ENCODE measurements at regions of chr19 and their contacts with region 1.

Region 1: DNA sequence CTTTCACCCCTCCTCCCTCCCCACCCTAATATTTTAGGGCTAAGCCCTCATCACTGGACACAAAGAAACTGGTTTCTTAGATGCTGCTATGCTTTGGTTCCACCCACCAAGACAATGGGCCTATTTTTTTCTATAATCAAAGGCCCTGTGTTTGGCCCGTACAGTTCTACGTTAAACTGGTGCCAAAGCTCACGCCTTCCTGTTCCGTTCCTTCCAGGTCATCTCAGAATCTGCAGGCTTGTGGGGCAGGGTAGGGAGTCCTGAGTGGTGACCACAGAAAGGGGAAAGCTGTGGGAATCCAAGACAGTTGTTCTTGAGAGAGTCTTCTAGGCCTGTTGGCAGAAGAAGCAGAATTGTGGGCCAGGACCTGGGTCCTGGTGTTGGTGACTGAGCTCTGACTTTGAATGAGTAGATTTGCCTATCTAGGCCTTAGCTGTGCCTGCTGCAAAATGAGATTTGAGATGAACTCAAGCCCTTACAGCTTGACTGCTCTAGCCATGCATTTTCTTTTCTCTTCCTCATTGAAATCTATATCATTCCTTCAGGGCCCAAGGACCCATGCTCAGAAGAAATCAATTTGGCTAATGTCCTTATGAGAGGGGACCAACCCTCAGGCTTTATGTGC is 19.1 kb upstream of the CXCL17 start:
- DNase-seq: peak; percentile 74
- H3K4me3 Mint-ChIP-seq: no peak overlapping the region
- H3K27ac Mint-ChIP-seq: peak overlapping the region; percentile 0
- H3K4me1 Mint-ChIP-seq: peaks cover 44% of the 10 kb centered on the region
- H3K27me3 Mint-ChIP-seq: no peaks in the 10 kb centered on the region
- CTCF ChIP-seq: no peak

Region 2: DNA sequence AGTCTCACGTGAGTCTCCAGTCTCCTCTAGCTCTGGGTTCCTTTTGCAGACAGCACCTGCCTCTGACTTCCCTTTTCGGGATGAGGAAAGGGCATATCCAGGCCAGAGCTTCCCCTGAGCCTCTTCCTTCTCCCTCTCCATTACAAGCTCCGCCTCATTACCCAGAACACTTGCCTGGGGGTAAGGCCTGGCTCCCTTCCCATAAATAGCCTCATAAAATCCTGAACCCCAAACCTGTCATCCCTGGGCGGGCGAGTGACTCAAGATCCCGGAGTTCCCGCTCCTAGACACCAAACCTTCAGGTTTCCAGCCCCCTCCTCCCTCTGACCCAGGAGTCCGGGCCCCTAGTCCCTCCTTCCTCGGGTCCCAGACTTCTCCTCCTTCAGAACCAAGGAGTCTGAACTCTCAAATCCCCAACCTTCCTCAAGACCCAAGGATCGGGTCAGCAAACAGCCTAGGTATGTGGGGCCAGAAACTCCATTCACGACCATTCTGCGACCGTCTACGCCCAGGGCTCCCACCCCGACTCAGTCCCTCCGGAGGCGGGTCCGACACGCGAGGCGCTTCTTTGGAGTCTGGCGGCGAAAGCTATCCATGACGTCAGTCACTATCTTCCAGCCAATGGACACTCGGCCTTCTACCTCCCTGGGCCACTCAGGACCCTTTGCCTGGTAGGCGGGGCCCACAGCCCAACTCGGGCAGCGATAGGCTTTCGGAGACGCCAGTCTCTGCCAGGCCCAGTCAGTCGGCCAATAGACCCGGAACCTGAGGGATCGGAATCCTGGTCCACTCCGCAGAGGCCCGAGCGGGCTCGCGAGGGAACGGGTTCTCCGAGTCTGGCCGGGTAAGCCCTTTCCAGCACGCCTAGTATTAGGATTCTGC is 65.2 kb before region 1 on chr19:
- CTCF ChIA-PET with region 1: no interaction called
- intact Hi-C with region 1: no loop called
- DNase-seq: peak; percentile 100
- H3K4me3 Mint-ChIP-seq: peak overlapping the region; percentile 86
- H3K27ac Mint-ChIP-seq: peak overlapping the region; percentile 90
- H3K4me1 Mint-ChIP-seq: peaks cover 29% of the 10 kb centered on the region
- H3K27me3 Mint-ChIP-seq: peaks cover 21% of the 10 kb centered on the region
- CTCF ChIP-seq: no peak

Region 3: DNA sequence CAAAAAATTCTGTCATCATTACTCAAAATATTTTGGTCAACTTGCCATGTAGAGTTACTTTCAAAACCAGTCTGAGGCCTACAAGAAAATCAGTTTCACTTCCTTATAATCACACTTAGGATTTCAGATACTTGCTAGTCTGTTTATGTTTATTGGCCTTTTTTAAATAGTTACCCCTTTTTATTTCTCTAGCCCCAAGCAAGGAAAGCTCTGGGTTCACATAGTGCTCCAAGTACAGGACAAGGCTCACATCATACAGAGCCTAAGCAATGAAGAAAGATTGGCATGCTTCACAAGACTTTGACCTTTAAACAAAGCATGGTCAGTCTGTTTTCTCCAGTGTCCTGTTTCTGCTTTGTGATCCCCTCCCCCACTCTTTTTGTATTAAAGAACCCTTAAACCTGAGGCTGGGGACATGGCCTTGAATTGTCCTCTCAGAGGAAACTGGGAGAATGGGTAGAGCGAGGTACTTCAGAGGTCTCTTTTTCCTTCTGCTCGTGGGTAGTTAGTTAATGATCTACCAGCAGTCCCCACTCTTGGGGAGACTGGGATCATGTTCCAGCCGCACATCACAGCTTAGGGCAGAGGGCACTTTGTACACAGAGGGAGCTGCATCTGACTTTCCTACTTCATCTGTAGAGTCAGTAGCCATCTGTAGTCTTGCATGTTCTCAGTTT is 35.8 kb after region 1 on chr19:
- CTCF ChIA-PET with region 1: interaction called, 6 read pairs
- intact Hi-C with region 1: loop called (anchors 5 kb)
- DNase-seq: peak; percentile 70
- H3K4me3 Mint-ChIP-seq: peak overlapping the region; percentile 22
- H3K27ac Mint-ChIP-seq: peak overlapping the region; percentile 77
- H3K4me1 Mint-ChIP-seq: peaks cover 33% of the 10 kb centered on the region
- H3K27me3 Mint-ChIP-seq: no peaks in the 10 kb centered on the region
- CTCF ChIP-seq: no peak

Measured in Calu3 (cell line).